AG04449 (cell line): ENCODE measurements at regions of chr11 and their contacts with region 1.

Region 1: GRCh38 chr11:78050964-78051831 is 12.5 kb upstream of the THRSP start:
- DNase-seq: peak; percentile 29
- H3K4me3 ChIP-seq: no peak overlapping the region
- CTCF ChIP-seq: no peak

Region 2: DNA sequence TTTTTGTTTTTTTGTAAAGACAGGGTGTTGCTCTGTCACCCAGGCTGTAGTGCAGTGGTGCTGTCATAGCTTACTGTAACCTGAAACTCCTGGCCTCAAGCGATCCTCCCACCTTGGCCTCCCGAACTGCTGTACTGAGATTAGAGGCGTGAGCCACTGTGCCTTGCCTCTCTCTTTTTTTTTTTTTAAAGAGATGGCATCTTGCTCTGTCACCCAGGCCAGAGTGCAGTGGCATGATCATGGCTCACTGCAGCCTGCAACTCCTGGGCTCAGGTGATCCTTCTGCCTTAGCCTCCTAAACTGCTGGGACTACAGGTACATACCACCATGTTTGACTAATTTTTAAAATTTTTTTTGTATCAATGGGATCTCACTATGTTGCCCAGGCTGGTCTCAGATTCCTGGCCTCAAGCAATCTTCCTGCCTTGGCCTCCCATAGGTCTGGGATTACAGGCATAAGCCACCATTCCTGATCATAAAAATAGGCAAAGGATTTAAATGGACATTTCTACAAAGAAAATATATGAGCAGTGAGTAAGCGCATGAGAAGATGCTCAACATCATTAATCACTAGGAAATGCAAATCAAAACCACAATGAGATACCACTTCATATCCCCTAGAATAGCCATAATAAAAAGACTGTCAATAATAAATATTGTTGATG is 396.3 kb before region 1 on chr11:
- CTCF ChIA-PET with region 1: no interaction called
- POLR2A ChIA-PET with region 1: no interaction called
- DNase-seq: no peak
- H3K4me3 ChIP-seq: no peak overlapping the region
- CTCF ChIP-seq: no peak

Region 3: DNA sequence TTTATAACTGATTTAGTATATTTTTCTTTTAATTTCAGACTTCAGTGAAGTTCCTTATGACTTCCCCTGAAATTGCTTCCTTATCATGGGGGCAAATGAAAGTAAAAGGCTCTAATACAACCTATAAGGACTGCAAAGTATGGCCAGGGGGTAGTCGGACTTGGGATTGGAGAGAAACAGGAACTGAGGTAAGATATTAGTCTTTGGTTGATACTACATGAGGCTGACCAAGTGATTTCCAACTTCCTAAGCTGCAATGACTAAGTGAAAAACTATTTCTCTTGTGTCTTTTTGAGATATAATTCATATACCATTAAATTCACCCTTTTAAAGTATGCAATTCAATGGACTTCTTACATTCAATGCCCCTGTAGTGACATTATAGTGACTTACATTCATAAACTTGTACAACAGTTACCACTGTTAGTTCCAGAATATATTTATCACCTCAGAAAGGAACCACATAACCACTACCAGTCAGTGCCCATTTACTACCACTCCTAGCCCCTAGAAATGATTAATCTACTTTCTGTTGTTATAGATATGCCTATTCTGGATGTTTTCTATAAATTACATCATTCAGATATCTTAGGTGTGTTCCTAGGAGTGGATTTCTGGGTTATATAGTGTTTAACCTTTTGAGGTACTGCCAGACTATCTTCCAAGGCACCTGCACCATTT is 208.6 kb before region 1 on chr11:
- CTCF ChIA-PET with region 1: no interaction called
- POLR2A ChIA-PET with region 1: no interaction called
- DNase-seq: no peak
- H3K4me3 ChIP-seq: no peak overlapping the region
- CTCF ChIP-seq: no peak

Region 4: DNA sequence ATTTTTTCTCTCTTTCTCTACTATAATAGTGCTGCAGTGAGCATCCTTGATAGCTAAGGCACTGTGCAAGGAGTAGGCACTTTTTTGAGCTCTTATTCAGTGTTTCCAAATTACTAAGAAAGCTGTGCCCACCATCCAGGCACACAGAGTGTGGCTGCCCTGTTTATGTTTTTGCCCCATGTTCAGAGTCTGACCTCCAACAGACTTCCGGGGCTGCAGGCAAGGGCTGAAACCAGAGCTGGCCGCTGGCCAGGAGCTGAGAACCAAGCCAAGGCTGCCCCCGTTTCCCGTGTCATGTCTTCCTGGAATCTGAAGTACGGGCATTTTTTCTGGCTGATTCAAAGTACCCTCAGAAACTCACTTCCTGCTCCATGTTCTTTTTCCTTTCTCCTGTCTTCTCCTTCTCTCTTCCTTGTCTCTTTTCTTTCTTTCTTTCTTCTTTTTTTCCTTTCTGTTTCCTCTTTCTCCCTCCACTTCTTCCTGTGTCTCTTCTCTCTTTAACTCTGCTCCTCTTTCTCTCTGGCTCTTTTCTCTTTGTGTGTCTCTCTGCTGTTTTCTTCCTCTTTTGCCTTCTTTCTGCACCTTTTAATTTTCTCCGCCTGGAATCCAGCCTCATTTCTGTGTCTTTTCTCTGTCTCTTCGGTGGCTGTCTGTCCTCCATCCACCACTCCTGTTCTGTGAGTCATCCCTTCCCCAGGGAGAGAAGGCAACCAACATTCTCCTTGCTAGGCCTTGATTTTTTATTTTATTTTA is 11.1 kb before region 1 on chr11:
- CTCF ChIA-PET with region 1: interaction called, 90 read pairs
- POLR2A ChIA-PET with region 1: no interaction called
- DNase-seq: peak; percentile 63
- H3K4me3 ChIP-seq: peak overlapping the region; percentile 29
- CTCF ChIP-seq: no peak